ENCODE measurements at regions of chr12 and their contacts with region 1.

Region 1: DNA sequence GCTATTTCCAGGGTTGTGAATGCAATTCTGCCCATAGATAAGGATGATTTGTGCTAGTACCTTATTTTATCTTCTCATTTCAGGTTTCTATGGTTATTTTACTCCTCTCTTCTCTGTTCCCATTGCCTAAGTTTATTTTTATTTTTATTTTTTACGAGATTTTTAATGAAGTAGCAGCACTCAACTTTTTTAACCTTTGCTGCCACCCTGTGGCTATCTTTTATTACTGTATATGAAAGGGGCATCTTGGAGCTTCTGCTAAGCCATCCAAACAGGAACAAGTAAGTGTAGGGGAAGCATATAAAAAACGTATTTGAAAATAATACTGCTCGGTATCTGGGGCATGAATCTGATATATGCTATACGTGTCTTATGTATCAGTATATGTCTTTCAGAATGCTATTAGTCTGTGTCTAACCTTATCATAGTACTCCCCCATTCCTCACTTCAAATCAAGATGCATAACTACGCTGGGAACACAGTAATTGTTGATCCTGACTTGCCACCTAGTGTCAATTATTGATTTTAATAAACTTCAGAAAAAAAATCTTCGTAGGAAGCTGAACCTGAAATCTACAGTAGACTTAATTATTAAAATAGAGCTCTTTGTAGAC is 60.3 kb downstream of the KLRG1 start:
- DNase-seq: peak; percentile 60
- H3K4me3 Mint-ChIP-seq: no peak overlapping the region
- H3K27ac Mint-ChIP-seq: no peak overlapping the region
- H3K4me1 Mint-ChIP-seq: no peaks in the 10 kb centered on the region
- H3K27me3 Mint-ChIP-seq: peaks cover 36% of the 10 kb centered on the region
- CTCF ChIP-seq: peak; percentile 40

Region 2: GRCh38 chr12:8662593-8662992 is 387.0 kb before region 1 on chr12 and contains the start of gene MFAP5:
- CTCF ChIA-PET with region 1: interaction called, 70 read pairs
- POLR2A ChIA-PET with region 1: interaction called, 6 read pairs
- intact Hi-C with region 1: no loop called
- DNase-seq: no peak
- H3K4me3 Mint-ChIP-seq: no peak within 1 kb of the TSS
- H3K27ac Mint-ChIP-seq: no peak within 1 kb of the TSS
- H3K4me1 Mint-ChIP-seq: peaks cover 5% of the 10 kb centered on the region
- H3K27me3 Mint-ChIP-seq: no peaks in the 10 kb centered on the region
- CTCF ChIP-seq: no peak
- total RNA-seq, gene MFAP5: 0.64 and 1.6 TPM in 2 replicates

Region 3: DNA sequence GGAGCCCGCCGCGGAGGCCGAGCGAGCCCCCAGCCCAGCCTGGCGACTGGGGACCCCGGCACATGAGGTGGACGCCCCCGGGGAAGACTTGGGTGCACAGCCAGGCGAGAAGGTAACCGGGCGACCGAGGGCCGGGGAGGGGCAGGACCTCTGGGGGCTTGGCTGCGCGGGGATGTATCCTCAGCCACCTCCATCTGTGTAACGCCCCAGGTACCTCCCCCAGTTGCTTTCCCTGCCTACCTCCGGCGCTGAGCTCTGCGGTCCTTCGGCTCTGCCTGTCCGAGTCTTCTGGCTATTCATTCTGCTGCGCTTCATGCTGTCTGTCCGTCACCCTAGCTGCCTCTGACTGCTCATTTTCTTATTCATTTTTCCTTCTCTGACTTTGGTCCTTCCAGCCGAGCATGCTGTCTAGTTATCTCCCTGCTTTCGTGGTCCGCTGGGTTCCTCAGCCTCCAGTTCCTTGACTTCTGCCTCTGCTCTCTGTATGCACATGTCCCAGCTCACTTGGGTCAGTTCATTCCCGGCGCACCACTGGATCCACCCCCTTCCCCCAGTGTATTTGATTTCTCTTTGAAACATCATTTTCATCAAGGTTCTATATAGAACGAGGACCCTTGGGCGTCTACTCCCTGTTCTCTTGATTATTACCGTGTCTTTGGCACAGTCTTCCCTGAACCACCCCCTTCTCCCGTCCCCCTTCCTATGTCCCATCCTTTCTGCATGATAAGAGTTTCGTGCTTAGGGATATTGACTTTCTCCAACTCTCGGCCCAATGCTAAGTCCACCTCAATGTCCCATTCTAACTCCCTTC is 134.7 kb before region 1 on chr12:
- CTCF ChIA-PET with region 1: interaction called, 12 read pairs
- POLR2A ChIA-PET with region 1: interaction called, 5 read pairs
- intact Hi-C with region 1: no loop called
- DNase-seq: peak; percentile 61
- H3K4me3 Mint-ChIP-seq: no peak overlapping the region
- H3K27ac Mint-ChIP-seq: no peak overlapping the region
- H3K4me1 Mint-ChIP-seq: peaks cover 16% of the 10 kb centered on the region
- H3K27me3 Mint-ChIP-seq: no peaks in the 10 kb centered on the region
- CTCF ChIP-seq: no peak

Region 4: GRCh38 chr12:9032202-9033178 is 17.1 kb before region 1 on chr12:
- CTCF ChIA-PET with region 1: interaction called, 27 read pairs
- POLR2A ChIA-PET with region 1: no interaction called
- intact Hi-C with region 1: no loop called
- DNase-seq: no peak
- H3K4me3 Mint-ChIP-seq: no peak overlapping the region
- H3K27ac Mint-ChIP-seq: no peak overlapping the region
- H3K4me1 Mint-ChIP-seq: no peaks in the 10 kb centered on the region
- H3K27me3 Mint-ChIP-seq: no peaks in the 10 kb centered on the region
- CTCF ChIP-seq: no peak

Region 5: DNA sequence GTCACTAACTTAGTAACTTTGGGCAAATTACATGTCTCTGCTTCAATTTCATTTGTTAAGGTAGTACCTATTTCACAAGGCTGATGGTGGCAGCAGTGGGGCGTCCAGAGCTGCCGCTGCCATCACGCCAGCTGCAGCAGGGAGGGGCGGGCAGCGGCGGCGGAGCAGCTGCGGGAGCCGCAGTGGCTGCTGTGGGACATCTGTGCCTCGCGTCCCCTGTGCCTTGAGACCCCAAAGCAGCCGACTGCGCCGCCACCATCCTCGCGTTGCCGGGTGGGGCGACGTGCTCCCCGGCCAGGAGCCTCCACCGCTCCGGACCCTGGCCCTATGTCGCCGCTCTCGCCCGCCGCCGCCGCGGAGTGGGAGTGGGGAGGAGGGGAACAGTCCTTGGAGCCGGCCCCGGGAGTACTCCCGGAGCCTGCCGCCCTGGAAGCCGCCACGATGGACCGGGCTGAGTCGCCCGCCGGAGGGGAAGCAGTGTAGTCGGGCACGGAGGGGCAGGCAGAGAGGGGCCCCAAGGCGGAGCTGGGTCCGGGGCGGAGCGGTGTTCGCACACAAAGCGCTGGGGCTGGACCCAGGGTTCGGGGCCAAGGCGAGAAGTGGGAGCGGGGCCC is 14.7 kb after region 1 on chr12:
- CTCF ChIA-PET with region 1: interaction called, 28 read pairs
- POLR2A ChIA-PET with region 1: interaction called, 7 read pairs
- intact Hi-C with region 1: no loop called
- DNase-seq: peak; percentile 71
- H3K4me3 Mint-ChIP-seq: peak overlapping the region; percentile 79
- H3K27ac Mint-ChIP-seq: peak overlapping the region; percentile 79
- H3K4me1 Mint-ChIP-seq: peaks cover 13% of the 10 kb centered on the region
- H3K27me3 Mint-ChIP-seq: no peaks in the 10 kb centered on the region
- CTCF ChIP-seq: peak; percentile 38

Region 6: GRCh38 chr12:9109737-9110491 is 60.3 kb after region 1 on chr12:
- CTCF ChIA-PET with region 1: no interaction called
- POLR2A ChIA-PET with region 1: no interaction called
- intact Hi-C with region 1: no loop called
- DNase-seq: no peak
- H3K4me3 Mint-ChIP-seq: no peak overlapping the region
- H3K27ac Mint-ChIP-seq: no peak overlapping the region
- H3K4me1 Mint-ChIP-seq: no peaks in the 10 kb centered on the region
- H3K27me3 Mint-ChIP-seq: no peaks in the 10 kb centered on the region
- CTCF ChIP-seq: no peak